ENCODE measurements at regions of chr10 and their contacts with region 1.

Region 1: DNA sequence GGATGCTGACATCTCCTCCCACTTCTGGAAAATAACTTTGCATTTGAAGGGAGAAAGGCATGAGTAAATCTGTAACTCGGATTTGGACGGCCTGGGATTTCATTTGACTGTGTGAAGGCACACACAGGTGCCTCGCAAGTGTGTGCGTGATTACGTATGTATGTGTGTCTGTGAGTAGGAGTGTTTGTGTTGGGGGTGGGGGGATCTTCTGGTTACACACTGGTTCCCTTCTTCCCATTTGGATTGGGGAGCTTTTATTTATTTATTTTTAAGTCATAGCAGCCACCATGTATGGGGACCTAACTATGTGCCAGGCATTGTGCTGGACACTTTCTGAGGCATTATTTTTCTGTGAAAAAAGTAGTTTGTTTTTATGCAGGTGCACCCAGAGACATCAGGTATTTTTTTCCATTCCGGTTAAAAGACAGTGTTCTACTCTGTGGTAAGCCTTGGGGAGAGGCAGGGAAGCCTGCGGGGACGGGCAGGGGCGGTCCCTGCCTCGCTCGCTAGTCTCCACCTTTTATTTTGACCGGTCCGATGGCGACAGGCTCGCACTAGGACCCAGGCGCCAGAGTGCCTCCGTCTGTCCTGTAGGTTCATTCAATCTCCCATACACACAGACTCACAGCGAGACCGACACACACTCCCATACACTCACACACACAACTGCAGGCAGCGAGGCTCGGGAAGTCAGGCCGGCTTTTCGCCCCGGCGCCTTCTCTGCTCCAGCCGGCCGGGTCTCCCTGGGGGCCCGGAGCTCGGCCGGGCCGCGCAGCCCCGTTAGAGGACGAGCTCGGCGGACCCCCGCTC is at the start of gene MXI1:
- DNase-seq: peak; percentile 87
- ATAC-seq: peak; percentile 24
- total RNA-seq, gene MXI1: 75.2 TPM

Region 2: DNA sequence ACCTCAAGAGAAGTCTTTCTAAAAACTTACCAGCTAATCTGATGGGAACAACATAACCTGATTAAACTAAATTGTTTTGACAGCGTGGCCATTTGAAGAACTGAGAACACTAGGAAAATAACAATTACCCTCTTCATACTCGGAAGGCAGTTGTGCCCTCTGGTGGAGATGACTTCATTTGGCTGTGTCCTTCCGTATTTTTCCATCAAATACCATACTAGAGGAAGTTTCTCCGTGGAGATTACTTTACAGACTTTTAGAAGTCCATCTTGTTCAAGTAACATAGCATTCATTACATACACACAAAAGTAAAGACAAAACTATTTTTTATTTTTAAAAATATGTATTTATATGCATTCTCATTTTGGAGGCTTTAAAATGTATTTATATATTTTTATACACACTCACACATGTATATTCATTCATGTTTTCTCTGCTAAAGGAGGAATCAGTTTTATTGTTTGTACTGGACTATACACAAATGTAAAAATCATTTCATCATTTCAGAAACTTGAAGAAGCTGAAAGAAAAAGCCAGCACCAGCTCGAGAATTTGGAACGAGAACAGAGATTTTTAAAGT is 72.3 kb after region 1 on chr10:
- intact Hi-C with region 1: loop called (anchors 5 kb)
- DNase-seq: no peak
- ATAC-seq: peak; percentile 87